OCI-LY7 (cell line): ENCODE measurements at regions of chr6 and their contacts with region 1.

Region 1: GRCh38 chr6:46221222-46221793 is 50.5 kb upstream of the ENPP5 start:
- DNase-seq: peak; percentile 79
- H3K4me3 ChIP-seq: no peak overlapping the region
- H3K27ac ChIP-seq: peak overlapping the region; percentile 36
- H3K4me1 ChIP-seq: peaks cover 17% of the 10 kb centered on the region
- CTCF ChIP-seq: peak; percentile 99

Region 2: DNA sequence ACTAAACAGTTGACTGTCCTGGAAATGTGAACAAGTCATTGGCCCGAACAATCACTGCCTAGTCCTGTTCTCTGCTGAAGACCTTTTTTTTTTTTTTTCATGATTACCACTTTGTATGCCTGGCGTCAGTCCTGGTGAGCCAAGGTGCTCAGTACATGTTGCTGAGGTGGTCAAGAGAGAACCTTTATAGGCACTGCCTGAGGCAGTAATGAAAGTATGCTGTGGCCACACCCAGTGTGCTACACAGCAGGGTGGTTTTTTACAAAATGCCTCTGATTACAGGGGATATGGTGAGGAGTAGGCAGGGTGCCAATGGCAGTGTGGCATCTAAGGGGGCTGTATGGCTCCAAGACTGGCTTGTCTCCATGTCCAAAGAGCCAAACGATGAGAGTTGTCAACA is 84.5 kb after region 1 on chr6:
- CTCF ChIA-PET with region 1: no interaction called
- POLR2A ChIA-PET with region 1: no interaction called
- intact Hi-C with region 1: no loop called
- DNase-seq: no peak
- H3K4me3 ChIP-seq: no peak overlapping the region
- H3K27ac ChIP-seq: no peak overlapping the region
- H3K4me1 ChIP-seq: no peaks in the 10 kb centered on the region
- CTCF ChIP-seq: no peak

Region 3: GRCh38 chr6:46410334-46410953 is 189.1 kb after region 1 on chr6:
- CTCF ChIA-PET with region 1: interaction called, 4 read pairs
- POLR2A ChIA-PET with region 1: interaction called, 5 read pairs
- intact Hi-C with region 1: loop called (anchors 1 kb)
- DNase-seq: peak; percentile 63
- H3K4me3 ChIP-seq: no peak overlapping the region
- H3K27ac ChIP-seq: no peak overlapping the region
- H3K4me1 ChIP-seq: no peaks in the 10 kb centered on the region
- CTCF ChIP-seq: peak; percentile 90

Region 4: GRCh38 chr6:46491628-46492547 is 270.6 kb after region 1 on chr6:
- CTCF ChIA-PET with region 1: interaction called, 3 read pairs
- POLR2A ChIA-PET with region 1: no interaction called
- intact Hi-C with region 1: loop called (anchors 2 kb)
- DNase-seq: peak; percentile 39
- H3K4me3 ChIP-seq: peak overlapping the region; percentile 72
- H3K27ac ChIP-seq: no peak overlapping the region
- H3K4me1 ChIP-seq: peaks cover 6% of the 10 kb centered on the region
- CTCF ChIP-seq: peak; percentile 79

Region 5: GRCh38 chr6:46573140-46573539 is 351.8 kb after region 1 on chr6:
- CTCF ChIA-PET with region 1: no interaction called
- POLR2A ChIA-PET with region 1: no interaction called
- intact Hi-C with region 1: no loop called
- DNase-seq: no peak
- H3K4me3 ChIP-seq: no peak overlapping the region
- H3K27ac ChIP-seq: no peak overlapping the region
- H3K4me1 ChIP-seq: no peaks in the 10 kb centered on the region
- CTCF ChIP-seq: no peak

Region 6: GRCh38 chr6:46781478-46782378 is 560.4 kb after region 1 on chr6:
- CTCF ChIA-PET with region 1: no interaction called
- POLR2A ChIA-PET with region 1: no interaction called
- intact Hi-C with region 1: loop called (anchors 2 kb)
- DNase-seq: peak; percentile 72
- H3K4me3 ChIP-seq: no peak overlapping the region
- H3K27ac ChIP-seq: no peak overlapping the region
- H3K4me1 ChIP-seq: no peaks in the 10 kb centered on the region
- CTCF ChIP-seq: peak; percentile 98